AG04450 (cell line): ENCODE measurements at regions of chr3 and their contacts with region 1.

Region 1: DNA sequence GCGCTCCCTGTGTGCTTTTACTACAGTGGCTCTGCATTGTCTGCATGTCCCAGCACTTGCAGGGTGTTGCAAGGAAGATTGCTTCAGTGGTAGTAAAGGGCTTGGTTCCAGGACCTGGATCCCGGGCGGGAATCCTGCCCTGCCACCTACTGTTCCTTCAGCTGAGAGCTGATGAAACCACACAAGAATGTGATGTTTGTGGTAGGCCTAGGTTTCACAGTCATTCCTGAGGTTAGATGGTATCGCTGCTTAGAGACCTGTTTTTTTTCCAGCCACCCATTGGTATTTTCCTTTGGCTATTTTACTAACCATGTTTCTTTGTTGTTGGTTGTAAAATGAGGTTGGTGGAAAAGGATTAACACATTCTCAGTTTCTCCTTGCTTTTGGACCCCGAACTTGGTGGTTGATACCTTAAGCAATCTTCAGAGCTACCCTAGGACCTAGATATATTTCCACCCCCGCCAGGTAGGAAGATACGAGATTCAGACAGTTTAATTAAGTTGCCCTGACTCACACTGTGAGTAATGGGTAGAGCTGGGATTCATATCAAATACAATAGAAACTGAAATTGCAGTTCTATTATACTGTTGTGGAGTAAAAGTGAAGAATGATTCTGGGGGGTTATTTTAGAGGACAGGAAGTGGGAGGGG is 11.4 kb downstream of the GPR87 start:
- DNase-seq: peak; percentile 84
- H3K4me3 ChIP-seq: no peak overlapping the region
- H3K27ac ChIP-seq: peak overlapping the region; percentile 65
- H3K27me3 ChIP-seq: no peaks in the 10 kb centered on the region
- CTCF ChIP-seq: peak; percentile 26

Region 2: GRCh38 chr3:151035072-151035471 is 270.2 kb before region 1 on chr3:
- CTCF ChIA-PET with region 1: no interaction called
- POLR2A ChIA-PET with region 1: no interaction called
- DNase-seq: no peak
- H3K4me3 ChIP-seq: no peak overlapping the region
- H3K27ac ChIP-seq: no peak overlapping the region
- H3K27me3 ChIP-seq: no peaks in the 10 kb centered on the region
- CTCF ChIP-seq: no peak

Region 3: GRCh38 chr3:151236736-151237135 is 68.5 kb before region 1 on chr3:
- CTCF ChIA-PET with region 1: no interaction called
- POLR2A ChIA-PET with region 1: no interaction called
- DNase-seq: no peak
- H3K4me3 ChIP-seq: no peak overlapping the region
- H3K27ac ChIP-seq: no peak overlapping the region
- H3K27me3 ChIP-seq: no peaks in the 10 kb centered on the region
- CTCF ChIP-seq: no peak

Region 4: GRCh38 chr3:151290673-151291072 is 14.6 kb before region 1 on chr3:
- CTCF ChIA-PET with region 1: interaction called, 20 read pairs
- POLR2A ChIA-PET with region 1: no interaction called
- DNase-seq: no peak
- H3K4me3 ChIP-seq: no peak overlapping the region
- H3K27ac ChIP-seq: no peak overlapping the region
- H3K27me3 ChIP-seq: no peaks in the 10 kb centered on the region
- CTCF ChIP-seq: peak; percentile 64